ENCODE measurements at regions of chr12 and their contacts with region 1.

Region 1: GRCh38 chr12:49232940-49233841 is 31.7 kb upstream of the TUBA1C start:
- DNase-seq: no peak
- H3K4me3 ChIP-seq: no peak overlapping the region
- H3K27ac ChIP-seq: no peak overlapping the region
- H3K4me1 ChIP-seq: no peaks in the 10 kb centered on the region
- H3K27me3 ChIP-seq: no peaks in the 10 kb centered on the region
- CTCF ChIP-seq: no peak

Region 2: GRCh38 chr12:49060237-49061156 is 172.7 kb before region 1 on chr12 and contains the start of gene KMT2D:
- CTCF ChIA-PET with region 1: interaction called, 8 read pairs
- dilution Hi-C with region 1: loop called (anchors 10 kb)
- in situ Hi-C with region 1: loop called in 1 of 2 experiments (anchors 10 kb)
- intact Hi-C with region 1: loop called (anchors 1 kb)
- DNase-seq: peak; percentile 93
- H3K4me3 ChIP-seq: peak within 1 kb of the TSS; percentile 87 to 93 (median 89)
- H3K27ac ChIP-seq: peak within 1 kb of the TSS; percentile 82
- H3K4me1 ChIP-seq: peaks cover 24% of the 10 kb centered on the region
- H3K27me3 ChIP-seq: no peaks in the 10 kb centered on the region
- CTCF ChIP-seq: peak in 1 of 2 donors; percentile 30
- total RNA-seq, gene KMT2D: 30.7 to 78.0 TPM

Region 3: GRCh38 chr12:49088190-49088931 is 144.8 kb before region 1 on chr12:
- CTCF ChIA-PET with region 1: no interaction called
- dilution Hi-C with region 1: no loop called
- in situ Hi-C with region 1: no loop called
- intact Hi-C with region 1: loop called (anchors 1 kb)
- DNase-seq: peak; percentile 90
- H3K4me3 ChIP-seq: no peak overlapping the region
- H3K27ac ChIP-seq: no peak overlapping the region
- H3K4me1 ChIP-seq: peaks cover 26% of the 10 kb centered on the region
- H3K27me3 ChIP-seq: peaks cover 27% of the 10 kb centered on the region
- CTCF ChIP-seq: peak; percentile 88 to 90

Region 4: GRCh38 chr12:49200919-49201594 is 32.1 kb before region 1 on chr12:
- CTCF ChIA-PET with region 1: interaction called, 5 read pairs
- dilution Hi-C with region 1: loop called (anchors 5 kb)
- in situ Hi-C with region 1: no loop called
- intact Hi-C with region 1: loop called (anchors 2 kb)
- DNase-seq: peak; percentile 76
- H3K4me3 ChIP-seq: peak overlapping the region in 1 of 3 experiments; percentile 11
- H3K27ac ChIP-seq: peak overlapping the region; percentile 96
- H3K4me1 ChIP-seq: peaks cover 21% of the 10 kb centered on the region
- H3K27me3 ChIP-seq: no peaks in the 10 kb centered on the region
- CTCF ChIP-seq: no peak

Region 5: GRCh38 chr12:49274396-49275286 is 41.5 kb after region 1 on chr12:
- CTCF ChIA-PET with region 1: no interaction called
- dilution Hi-C with region 1: loop called (anchors 5 kb)
- in situ Hi-C with region 1: no loop called
- intact Hi-C with region 1: no loop called
- DNase-seq: no peak
- H3K4me3 ChIP-seq: no peak overlapping the region
- H3K27ac ChIP-seq: no peak overlapping the region
- H3K4me1 ChIP-seq: peaks cover 9% of the 10 kb centered on the region
- H3K27me3 ChIP-seq: no peaks in the 10 kb centered on the region
- CTCF ChIP-seq: no peak

Measured in mammary epithelial cell (primary cell).